PC-9 (cell line): ENCODE measurements at regions of chr17 and their contacts with region 1.

Region 1: DNA sequence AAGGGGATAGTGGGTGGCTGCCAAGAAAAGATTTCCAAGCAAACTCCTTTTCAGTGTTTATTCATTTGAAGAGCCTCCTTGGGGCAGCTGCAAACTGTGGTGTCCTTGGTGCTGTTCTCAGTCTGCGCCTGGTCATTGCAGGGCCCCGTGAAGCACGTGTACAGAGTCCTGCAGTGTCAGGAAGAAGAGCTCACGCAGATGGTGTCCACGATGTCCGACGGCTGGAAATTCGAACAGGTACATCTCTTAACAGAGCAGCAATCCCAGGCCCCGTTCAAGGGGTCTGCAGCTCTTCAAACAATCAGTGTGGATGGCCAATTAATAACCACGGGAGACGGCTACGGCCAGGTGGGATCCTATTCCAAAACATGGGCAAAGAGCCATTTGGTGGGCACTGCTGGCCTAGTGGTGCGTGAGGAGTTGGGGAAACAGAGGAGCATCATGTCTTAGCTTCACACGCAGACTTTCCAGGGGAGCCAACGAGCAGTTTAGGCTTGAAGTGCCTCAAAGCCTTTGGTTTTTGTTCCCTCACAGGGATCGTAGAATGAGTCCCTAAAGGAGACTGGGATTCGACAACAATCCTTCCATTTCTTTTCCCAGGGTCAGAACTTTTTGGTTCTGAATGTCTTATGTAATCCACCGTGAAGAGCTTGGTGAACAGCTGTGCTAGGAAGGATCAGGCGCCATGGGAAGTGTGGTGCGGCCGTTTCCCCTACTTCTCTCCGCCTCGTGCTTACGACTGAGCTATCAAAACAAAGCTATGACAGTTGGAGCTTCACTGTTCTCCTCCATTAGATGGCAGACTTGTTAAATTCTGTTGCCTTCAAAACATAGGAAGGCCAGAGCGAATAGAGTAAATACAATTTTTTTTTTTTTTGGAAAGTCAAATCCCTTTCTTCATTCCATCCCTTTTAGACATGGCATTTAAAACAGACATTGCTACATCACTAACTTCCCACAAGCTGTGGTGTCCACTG is 12.6 kb downstream of the KCTD2 start:
- DNase-seq: peak in 1 of 2 experiments; percentile 46
- H3K4me3 ChIP-seq: no peak overlapping the region
- H3K27ac ChIP-seq: no peak overlapping the region
- H3K4me1 ChIP-seq: no peaks in the 10 kb centered on the region
- H3K27me3 ChIP-seq: no peaks in the 10 kb centered on the region
- CTCF ChIP-seq: peak; percentile 55; the same call in 1 of the 2 replicates

Region 2: DNA sequence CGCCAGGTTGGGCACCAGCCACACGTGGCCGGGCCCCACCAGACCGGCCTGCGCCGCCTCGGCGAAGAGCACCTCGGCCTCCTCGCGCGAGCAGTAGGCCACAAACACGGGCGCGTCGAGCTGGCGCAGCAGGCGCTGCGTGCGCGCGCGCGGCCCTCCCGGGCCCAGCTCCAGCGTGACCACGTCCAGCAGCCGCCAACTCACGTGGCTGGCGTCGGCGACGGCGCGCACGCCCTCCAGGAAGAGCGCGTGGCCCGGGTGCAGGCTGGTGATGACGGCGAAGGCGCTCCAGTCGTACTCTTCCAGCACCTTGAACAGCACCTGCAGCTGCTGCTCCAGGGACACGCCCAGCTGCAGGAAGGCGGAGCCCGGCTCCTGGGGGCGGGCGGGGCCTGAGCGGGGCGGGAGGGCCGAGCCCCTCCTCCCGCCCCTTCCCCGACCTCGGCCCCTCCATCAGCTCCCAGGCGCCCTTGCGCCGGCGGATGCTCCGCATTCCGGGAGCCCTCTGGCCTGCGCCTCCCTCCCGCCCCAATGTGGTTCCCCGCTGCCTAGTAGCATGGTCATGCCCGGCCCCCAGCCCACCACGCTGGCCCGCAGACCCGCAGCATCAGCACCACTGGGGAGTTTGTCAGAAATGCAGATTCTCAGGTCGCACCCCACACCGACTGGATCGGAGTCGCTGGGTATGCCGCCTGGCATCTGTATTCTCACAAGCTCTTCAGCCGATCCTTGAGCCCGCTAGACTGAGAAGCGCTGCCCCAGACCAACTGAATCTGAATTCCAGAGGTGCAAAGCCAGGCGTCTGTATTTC is 207.2 kb before region 1 on chr17:
- CTCF ChIA-PET with region 1: no interaction called
- POLR2A ChIA-PET with region 1: no interaction called
- intact Hi-C with region 1: no loop called
- DNase-seq: no peak
- H3K4me3 ChIP-seq: no peak overlapping the region
- H3K27ac ChIP-seq: no peak overlapping the region
- H3K4me1 ChIP-seq: no peaks in the 10 kb centered on the region
- H3K27me3 ChIP-seq: peaks cover 66% of the 10 kb centered on the region
- CTCF ChIP-seq: no peak

Region 3: DNA sequence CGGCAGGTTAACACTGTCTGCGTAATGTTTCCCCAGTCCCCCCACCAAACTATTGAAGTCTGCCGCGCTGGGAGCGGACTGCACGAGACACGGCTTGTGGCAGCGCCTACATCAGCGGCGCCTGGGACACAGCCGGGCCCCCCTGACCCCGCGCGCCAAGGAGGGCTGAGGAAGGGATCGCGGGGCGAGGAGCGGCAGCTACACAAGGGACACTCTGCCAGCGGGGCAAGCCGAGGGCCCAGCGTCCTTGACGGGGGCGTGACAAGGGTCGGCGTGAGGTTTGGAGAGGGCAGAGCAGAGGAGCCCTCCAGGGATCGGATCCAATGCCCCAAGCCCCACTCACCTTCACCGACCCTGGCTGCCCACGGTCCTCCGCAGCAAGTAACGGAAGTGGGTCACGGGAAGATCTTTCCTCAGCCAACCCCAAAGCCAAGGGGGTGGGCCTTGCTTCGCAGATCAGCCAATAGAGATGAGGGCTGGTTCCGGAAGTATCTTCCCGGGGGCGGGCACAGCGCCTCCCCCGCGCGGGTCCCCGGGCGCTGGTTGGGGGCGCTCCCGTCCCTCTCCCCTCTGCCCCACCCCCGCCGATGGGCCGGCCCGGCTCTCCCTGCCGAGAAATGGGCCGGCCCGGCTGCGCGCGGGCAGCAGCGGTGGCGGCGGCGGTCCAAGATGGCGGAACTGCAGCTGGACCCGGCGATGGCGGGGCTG is 12.9 kb before region 1 on chr17 and contains the starts of genes ATP5PD and KCTD2:
- CTCF ChIA-PET with region 1: interaction called, 6 read pairs
- POLR2A ChIA-PET with region 1: interaction called, 15 read pairs
- intact Hi-C with region 1: no loop called
- DNase-seq: peak; percentile 89 to 95
- H3K4me3 ChIP-seq: peak within 1 kb of the TSS; percentile 84
- H3K27ac ChIP-seq: peak within 1 kb of the TSS; percentile 60
- H3K4me1 ChIP-seq: peaks cover 22% of the 10 kb centered on the region
- H3K27me3 ChIP-seq: no peaks in the 10 kb centered on the region
- CTCF ChIP-seq: no peak; the same call in 1 of the 2 replicates
- total RNA-seq, gene ATP5PD: 306 and 336 TPM in 2 replicates
- total RNA-seq, gene KCTD2: 18.4 and 18.6 TPM in 2 replicates

Region 4: DNA sequence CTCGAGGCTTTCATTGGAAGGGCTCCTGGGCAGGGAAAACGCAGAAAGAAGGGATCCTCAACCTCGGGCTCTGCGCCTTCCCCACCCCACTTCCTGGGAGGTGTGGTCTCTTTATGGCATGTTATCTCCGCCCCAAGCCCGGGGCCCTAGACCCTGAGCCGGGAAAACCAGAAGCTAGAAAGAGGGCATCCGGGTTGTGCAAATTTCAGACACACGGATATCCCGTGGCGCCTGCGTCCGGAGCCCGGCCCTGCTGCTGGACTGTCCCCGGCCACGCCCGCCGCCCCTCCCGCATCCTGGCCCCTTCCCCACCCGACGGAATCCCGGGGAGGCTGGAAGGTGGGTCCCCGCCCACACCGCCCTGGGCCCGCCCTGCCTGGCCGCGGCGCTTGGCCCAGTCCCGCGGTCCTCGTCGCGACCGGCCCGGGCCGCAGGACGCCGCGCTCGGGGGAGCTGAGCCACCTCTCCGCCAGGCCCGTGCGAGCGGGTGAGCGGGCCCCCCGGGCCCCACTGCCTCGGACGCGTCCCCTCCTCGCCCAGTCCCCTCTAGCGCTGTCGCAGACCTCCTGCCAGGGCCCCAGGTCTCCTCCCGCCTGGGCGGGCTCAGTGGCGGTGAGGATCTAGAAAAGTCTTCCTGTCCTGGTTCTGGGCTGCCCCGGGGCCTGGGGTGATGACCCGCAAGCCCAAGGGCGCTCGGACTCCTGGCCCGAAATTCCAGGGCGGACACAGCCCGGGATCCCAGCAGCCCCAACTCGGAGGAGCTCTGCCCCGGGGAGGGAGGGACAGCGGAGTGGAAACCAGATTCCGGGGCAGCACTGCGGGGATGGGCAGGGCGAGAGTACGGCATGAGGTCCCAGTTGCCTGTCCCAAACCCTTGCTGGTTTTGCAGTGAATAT is 28.1 kb after region 1 on chr17 and contains the start of gene SLC16A5:
- CTCF ChIA-PET with region 1: interaction called, 10 read pairs
- POLR2A ChIA-PET with region 1: no interaction called
- intact Hi-C with region 1: no loop called
- DNase-seq: peak; percentile 93 to 98
- H3K4me3 ChIP-seq: peak within 1 kb of the TSS; percentile 93
- H3K27ac ChIP-seq: peak within 1 kb of the TSS; percentile 91
- H3K4me1 ChIP-seq: peaks cover 84% of the 10 kb centered on the region
- H3K27me3 ChIP-seq: no peaks in the 10 kb centered on the region
- CTCF ChIP-seq: no peak
- total RNA-seq, gene SLC16A5: 70.2 and 88.5 TPM in 2 replicates

Region 5: DNA sequence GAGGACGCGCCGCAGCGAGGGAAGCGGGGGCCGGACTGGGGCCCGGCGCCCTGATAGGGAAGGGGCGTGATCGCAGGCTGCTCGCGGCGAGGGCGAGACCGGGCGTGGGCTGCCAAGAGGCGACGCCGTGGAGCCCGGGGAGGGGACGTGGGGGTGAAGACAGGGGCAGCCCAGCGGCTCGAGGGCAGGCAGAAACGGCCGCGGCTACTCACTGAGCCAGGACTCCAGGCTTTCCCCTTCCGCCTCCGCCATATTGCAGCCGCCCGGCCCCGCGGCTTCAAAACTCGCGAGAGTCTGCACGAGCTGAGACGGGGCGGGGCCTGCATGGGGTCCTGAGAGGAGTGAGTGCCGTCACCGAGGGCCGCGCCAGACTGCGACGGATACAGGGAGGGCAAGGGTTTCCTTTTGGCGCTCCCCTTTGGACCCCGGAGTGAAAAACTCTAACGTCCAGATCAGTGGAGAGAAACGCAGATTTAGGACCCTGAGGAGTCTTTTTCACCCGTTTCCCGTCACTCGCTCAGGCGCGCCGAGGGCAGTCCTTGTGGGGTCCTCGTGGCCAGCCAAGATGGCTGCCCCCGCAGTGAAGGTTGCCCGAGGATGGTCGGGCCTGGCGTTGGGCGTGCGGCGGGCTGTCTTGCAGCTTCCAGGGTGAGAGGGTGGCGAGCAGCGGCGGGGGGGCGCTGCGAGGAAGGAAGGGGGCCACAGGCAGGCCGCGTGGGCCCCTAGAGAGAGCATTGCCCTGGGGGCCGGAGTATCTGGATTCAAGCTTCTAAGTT is 201.9 kb after region 1 on chr17 and contains the starts of genes GGA3 and MRPS7:
- CTCF ChIA-PET with region 1: no interaction called
- POLR2A ChIA-PET with region 1: interaction called, 15 read pairs
- intact Hi-C with region 1: no loop called
- DNase-seq: peak; percentile 80 to 93
- H3K4me3 ChIP-seq: peak within 1 kb of the TSS; percentile 86
- H3K27ac ChIP-seq: peak within 1 kb of the TSS; percentile 88
- H3K4me1 ChIP-seq: peaks cover 21% of the 10 kb centered on the region
- H3K27me3 ChIP-seq: no peaks in the 10 kb centered on the region
- CTCF ChIP-seq: no peak
- total RNA-seq, gene GGA3: 34.8 and 37.5 TPM in 2 replicates
- total RNA-seq, gene MRPS7: 50.1 and 51.3 TPM in 2 replicates